ENCODE measurements at regions of chr22 and their contacts with region 1.

Region 1: GRCh38 chr22:36239401-36240171 is at the start of gene APOL2:
- DNase-seq: peak; percentile 74 to 95 (median 87)

Region 2: GRCh38 chr22:36286471-36287224 is 47.1 kb after region 1 on chr22:
- intact Hi-C with region 1: loop called (anchors 10 kb)
- DNase-seq: peak; percentile 49 to 89 (median 78)